PC-3 (cell line): ENCODE measurements at regions of chr5 and their contacts with region 1.

Region 1: DNA sequence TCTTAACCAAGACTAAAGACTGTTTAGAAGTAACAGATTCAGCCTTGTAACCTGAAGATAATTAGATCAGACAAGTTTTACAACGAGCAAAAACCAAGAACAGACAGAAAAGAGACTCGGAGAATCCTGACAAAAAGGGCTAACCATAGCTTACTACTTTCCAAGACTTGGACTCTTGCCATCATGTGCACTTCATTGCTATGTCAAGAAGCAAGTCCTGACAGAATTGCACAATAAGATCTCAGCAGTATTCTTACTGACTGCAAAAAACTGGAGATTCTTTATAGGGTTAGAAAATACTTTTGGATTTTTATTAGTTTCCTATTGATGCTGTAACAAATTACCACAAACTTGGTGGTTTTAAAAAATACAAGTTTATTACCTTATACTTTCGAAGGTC is 1539.0 kb upstream of the NUDT12 start:
- DNase-seq: peak; percentile 14
- ATAC-seq: no peak
- H3K4me3 ChIP-seq: no peak overlapping the region
- H3K27ac ChIP-seq: no peak overlapping the region
- H3K4me1 ChIP-seq: no peaks in the 10 kb centered on the region
- H3K27me3 ChIP-seq: no peaks in the 10 kb centered on the region
- CTCF ChIP-seq: no peak

Region 2: DNA sequence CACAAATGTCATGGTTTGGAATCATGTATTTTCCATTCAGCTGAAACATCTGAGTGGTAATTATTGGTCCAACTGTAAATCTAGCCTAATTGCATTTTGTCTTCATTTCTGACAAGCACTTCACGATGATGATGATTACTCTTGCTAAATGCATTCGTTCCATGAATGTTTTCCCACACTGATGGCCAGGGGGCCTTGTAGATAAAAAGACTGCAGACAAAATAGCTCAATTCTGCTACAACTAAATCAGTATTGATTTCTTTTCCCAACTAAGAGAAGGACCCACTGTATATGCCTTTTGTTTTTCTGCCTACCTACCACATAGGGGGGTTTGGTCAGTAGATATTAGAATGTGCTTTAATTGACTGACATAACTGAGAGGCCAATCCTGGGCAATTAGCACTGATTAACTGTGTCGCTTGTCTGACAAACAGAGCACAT is 187.7 kb before region 1 on chr5:
- CTCF ChIA-PET with region 1: no interaction called
- POLR2A ChIA-PET with region 1: no interaction called
- intact Hi-C with region 1: no loop called
- DNase-seq: no peak
- ATAC-seq: no peak
- H3K4me3 ChIP-seq: no peak overlapping the region
- H3K27ac ChIP-seq: no peak overlapping the region
- H3K4me1 ChIP-seq: peaks cover 38% of the 10 kb centered on the region
- H3K27me3 ChIP-seq: no peaks in the 10 kb centered on the region
- CTCF ChIP-seq: no peak

Region 3: GRCh38 chr5:105042623-105043022 is 59.0 kb before region 1 on chr5:
- CTCF ChIA-PET with region 1: no interaction called
- POLR2A ChIA-PET with region 1: interaction called, 15 read pairs
- intact Hi-C with region 1: no loop called
- DNase-seq: no peak
- ATAC-seq: no peak
- H3K4me3 ChIP-seq: no peak overlapping the region
- H3K27ac ChIP-seq: no peak overlapping the region
- H3K4me1 ChIP-seq: no peaks in the 10 kb centered on the region
- H3K27me3 ChIP-seq: no peaks in the 10 kb centered on the region
- CTCF ChIP-seq: no peak

Region 4: DNA sequence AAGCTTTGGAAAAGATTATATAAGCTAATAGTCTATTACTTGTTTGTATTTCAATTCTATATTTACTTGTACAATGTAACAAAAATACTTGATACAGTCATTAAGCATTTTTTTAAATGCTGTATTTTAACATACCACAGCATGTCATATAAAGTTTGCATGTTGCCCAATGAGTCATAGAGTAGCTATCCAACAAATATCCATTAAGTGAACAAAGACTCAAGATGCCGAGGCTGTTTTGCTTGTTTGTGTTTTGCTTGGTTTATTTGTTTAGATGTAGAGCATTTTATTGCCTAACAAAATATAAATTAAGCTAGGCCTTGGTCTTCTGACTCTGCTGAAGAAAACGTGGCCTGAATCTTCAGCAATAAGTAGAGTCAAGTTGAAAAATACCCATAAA is 45.3 kb after region 1 on chr5:
- CTCF ChIA-PET with region 1: no interaction called
- POLR2A ChIA-PET with region 1: no interaction called
- intact Hi-C with region 1: loop called (anchors 2 kb)
- DNase-seq: peak; percentile 66
- ATAC-seq: peak; percentile 90
- H3K4me3 ChIP-seq: no peak overlapping the region
- H3K27ac ChIP-seq: no peak overlapping the region
- H3K4me1 ChIP-seq: peaks cover 9% of the 10 kb centered on the region; the same call in 1 of the 2 replicates
- H3K27me3 ChIP-seq: no peaks in the 10 kb centered on the region
- CTCF ChIP-seq: no peak